ENCODE measurements at regions of chr1 and their contacts with region 1.

Region 1: DNA sequence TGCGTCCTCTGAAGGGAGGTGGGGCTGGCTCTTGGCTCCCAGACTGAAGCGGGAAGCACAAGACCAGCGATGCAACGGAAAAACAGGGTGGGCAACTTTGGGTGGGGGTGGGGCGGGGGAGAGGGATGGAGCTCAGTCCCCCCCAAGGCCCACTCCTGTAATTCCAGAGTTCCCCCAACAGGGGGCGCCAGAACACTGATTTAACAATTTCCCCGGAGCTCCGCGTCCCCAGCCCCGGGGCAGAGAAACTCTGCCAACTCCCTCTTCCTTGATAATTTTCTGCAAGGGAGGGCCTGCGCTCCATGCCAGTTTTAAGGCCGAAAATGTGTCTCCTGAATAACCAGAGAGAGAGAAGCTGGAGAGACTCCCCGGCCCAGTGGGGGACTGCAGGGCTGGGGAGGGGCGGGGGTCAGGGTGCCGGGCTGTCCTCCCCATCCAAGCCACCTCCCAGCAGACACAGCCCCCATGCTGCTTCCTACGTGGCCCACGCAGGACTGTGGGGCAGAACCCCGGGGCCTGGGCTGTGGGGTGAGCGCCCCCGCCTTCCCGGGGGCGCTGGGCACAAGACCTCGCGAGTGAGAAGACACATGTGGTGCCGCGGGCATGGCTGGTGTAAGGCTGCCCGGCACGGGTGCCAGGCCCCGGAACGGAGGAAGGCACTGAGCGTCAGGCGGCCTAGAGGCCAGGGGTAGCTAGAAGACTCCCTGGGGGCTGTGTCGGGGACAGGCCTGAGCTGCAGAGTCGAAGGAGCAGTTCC is 51.4 kb downstream of the KIF21B start:
- DNase-seq: peak; percentile 58
- H3K4me3 Mint-ChIP-seq: no peak overlapping the region
- H3K27ac Mint-ChIP-seq: no peak overlapping the region
- H3K4me1 Mint-ChIP-seq: no peaks in the 10 kb centered on the region
- H3K27me3 Mint-ChIP-seq: no peaks in the 10 kb centered on the region

Region 2: GRCh38 chr1:201016211-201016651 is 44.1 kb after region 1 on chr1:
- CTCF ChIA-PET with region 1: interaction called, 91 read pairs
- POLR2A ChIA-PET with region 1: interaction called, 23 read pairs
- DNase-seq: no peak
- H3K4me3 Mint-ChIP-seq: peak overlapping the region; percentile 69
- H3K27ac Mint-ChIP-seq: peak overlapping the region; percentile 99
- H3K4me1 Mint-ChIP-seq: peaks cover 95% of the 10 kb centered on the region
- H3K27me3 Mint-ChIP-seq: no peaks in the 10 kb centered on the region

Region 3: DNA sequence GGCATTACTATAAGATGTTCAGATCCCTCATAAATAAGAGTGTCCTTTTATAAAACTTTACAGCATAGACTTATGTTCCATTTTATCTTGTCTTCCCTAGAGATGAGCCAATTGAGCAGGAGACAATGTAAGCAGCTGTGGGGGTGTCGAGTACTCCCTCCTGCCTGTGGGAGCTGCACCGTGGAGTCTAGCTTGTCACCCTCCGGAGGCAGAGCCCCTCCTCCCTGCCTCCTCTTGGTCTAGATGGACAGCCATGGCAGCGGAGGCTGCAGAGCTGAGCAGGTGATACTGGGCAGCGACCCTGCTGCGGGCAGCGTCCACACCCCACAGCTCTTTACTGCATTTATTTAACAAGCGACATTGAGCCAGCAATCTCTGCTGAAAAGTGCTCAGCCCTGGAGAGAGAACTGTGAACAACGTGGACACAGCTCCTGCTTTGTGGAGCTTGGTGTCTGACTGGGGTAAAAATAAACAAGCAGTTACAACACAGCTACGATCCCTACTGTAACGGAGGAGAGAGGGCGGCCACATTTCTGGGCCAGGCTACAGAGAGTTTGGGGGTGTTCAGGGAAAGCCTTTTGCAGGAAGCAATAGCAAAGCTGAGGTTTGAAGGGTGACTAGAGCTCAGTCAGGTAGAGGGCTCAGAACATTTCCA is 64.2 kb after region 1 on chr1:
- CTCF ChIA-PET with region 1: interaction called, 60 read pairs
- POLR2A ChIA-PET with region 1: interaction called, 6 read pairs
- DNase-seq: no peak
- H3K4me3 Mint-ChIP-seq: no peak overlapping the region
- H3K27ac Mint-ChIP-seq: no peak overlapping the region
- H3K4me1 Mint-ChIP-seq: no peaks in the 10 kb centered on the region
- H3K27me3 Mint-ChIP-seq: no peaks in the 10 kb centered on the region

Region 4: DNA sequence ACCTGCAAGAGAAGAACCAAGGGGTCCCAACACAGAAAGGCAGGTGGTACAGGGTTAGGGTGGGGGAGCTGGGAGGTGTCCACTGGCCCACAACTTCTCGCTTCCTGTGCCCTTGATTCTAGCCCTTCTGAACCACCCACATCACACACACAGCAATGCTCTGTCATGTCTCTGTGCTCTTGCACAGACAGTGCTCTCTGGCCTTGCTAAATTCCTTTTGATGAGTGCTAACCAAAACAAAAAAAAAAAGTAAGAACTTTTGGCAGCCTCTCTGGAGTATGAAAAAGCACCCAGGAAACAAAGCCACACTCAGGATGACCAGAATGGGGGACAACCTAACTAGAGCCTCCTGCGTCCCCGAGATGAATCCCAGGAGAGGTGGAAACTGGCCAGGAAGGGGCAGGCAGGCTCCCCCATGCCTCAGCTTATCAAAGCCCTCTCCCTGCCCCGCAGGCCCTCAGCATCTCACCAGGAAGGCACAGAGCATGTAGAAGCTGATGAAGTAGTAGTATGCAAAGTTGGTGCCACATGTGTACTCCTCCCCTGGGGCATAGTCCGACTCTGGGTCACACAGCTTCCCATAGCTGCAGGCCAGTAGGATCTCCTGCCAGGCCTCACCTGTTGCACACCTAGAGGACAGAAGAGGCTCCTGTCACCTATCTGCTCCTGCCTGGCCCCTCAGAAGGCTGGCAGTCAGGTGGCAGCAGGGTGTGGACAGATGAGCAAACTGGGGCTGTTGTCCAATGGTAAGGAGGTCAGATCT is 78.6 kb after region 1 on chr1:
- CTCF ChIA-PET with region 1: interaction called, 60 read pairs
- POLR2A ChIA-PET with region 1: no interaction called
- DNase-seq: no peak
- H3K4me3 Mint-ChIP-seq: no peak overlapping the region
- H3K27ac Mint-ChIP-seq: no peak overlapping the region
- H3K4me1 Mint-ChIP-seq: no peaks in the 10 kb centered on the region
- H3K27me3 Mint-ChIP-seq: peaks cover 13% of the 10 kb centered on the region

Region 5: DNA sequence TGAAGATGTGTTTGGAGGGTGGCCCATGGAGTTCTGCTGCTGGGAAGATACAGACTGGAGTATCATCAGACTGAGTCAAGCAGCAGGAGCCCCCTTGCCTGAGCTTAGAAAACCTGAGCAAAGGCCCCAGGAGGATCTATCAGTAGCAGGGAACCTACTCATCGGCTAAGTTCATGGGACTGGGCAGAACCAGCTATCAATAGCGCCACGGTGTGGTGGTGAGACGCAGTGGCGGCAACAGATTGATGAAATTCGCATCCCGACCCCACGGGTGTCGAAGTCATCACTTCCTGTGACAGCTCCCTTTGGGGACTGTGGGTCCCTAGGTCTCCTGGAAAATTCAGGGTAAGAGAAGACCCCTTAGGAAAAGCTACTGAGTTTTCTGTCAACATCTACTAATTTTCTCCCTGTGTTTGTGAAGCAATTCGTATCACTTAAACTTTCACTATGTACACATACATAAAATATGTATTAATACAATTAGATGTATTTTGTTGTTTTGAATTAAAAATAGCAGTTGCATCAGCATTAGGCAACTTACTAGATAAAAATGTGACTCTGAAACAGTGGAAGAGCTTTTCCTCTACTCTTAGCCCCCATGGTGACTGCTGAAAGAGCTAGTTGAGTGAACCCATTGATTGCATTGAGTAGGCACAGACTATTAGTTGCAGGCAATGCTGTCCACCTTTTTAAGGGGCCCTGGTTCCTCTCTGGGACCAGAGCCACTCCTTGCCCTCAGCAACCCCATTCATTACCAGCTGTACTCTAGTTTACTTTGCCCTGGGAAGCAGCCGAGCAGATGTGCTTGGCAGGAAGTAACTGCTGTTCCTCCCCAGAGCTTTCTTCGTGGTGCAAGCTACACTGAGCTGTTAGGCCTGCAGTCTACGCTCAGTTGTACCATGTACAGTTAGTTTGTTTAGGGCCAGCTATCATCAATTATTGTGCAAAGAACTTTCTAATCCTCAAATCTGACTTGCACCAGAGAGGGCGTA is 147.4 kb after region 1 on chr1:
- CTCF ChIA-PET with region 1: interaction called, 22 read pairs
- POLR2A ChIA-PET with region 1: no interaction called
- DNase-seq: peak; percentile 58
- H3K4me3 Mint-ChIP-seq: no peak overlapping the region
- H3K27ac Mint-ChIP-seq: no peak overlapping the region
- H3K4me1 Mint-ChIP-seq: peaks cover 6% of the 10 kb centered on the region
- H3K27me3 Mint-ChIP-seq: peaks cover 33% of the 10 kb centered on the region